ENCODE measurements at regions of chr1 and their contacts with region 1.

Region 1: DNA sequence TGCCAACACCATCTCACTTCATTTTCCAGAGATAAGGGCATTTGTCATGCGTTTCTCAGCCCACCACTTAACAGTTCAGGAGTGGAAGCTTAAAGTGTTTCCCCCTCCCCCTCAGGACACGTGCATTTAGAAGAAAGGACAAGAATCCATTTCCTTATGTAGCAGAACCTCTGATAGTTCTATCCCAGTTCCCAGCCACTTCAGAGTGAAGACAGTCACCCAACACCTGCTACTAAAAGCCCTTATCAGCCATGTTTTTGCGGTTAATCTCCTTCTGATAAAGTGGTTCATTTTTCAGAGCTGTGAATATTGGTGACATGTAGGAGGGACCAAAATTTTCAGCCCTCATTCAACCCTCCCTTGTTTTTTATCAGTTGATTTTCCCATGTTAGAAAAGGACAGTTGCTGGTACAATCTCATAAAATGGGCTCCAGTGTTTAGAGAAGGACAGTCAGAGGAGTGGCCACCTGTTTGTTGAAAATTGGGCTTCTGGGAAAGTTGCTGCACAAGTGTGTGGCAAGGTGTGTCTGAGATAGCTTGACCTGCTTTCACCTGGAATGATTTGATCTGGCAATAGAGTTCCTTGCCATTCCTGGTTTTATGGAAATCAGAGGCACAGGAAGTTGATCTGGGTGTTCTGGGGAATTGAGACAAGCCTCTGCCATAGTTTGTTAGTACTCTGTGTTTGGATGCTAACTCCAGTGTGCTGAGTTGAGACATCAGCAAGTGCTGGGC is 114.0 kb downstream of the PPP1R12B start:
- DNase-seq: no peak
- H3K4me3 Mint-ChIP-seq: no peak overlapping the region
- H3K27ac Mint-ChIP-seq: no peak overlapping the region
- H3K4me1 Mint-ChIP-seq: peaks cover 24% of the 10 kb centered on the region
- H3K27me3 Mint-ChIP-seq: no peaks in the 10 kb centered on the region
- CTCF ChIP-seq: no peak

Region 2: DNA sequence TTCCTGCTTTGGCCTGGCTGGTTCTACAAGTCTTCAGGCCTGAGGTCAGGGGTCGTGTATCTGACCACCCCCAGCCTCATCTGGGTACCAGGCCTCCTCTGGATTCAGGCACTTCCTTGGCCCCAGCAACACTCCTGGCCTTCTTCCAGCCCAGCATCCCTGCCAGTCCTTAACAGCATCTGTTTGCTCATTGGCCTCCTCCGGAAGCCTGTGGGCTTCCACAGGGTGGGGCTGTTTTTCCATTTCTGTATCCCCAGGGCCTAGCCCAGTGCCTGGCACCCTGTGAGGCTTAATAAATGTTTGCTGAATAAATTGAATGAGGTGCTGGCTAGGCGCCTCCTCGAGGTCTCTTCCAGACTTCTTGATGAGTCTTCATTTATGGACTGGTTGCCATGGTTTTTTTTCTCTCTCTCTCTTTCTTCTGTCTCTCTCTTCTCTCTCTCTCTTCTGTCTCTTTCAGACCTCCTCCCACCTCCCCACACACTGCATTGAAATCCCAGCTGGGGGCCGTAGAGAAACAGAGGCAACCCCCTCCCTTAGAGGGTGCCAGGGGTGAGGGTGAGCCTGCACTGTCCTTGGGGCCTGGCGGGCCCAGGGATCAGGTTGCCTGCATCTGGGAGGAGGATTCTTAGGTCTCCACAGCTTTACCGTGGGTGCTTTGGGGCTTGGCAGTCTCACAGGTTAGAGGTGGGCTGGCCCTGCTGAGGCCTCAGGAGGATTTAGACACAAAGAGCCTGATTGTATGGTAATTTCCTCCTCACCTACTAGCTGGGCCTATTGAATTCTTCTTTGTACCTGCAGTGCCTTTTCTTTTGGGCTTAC is 361.1 kb before region 1 on chr1:
- CTCF ChIA-PET with region 1: no interaction called
- POLR2A ChIA-PET with region 1: no interaction called
- intact Hi-C with region 1: no loop called
- DNase-seq: no peak
- H3K4me3 Mint-ChIP-seq: no peak overlapping the region
- H3K27ac Mint-ChIP-seq: no peak overlapping the region
- H3K4me1 Mint-ChIP-seq: peaks cover 13% of the 10 kb centered on the region
- H3K27me3 Mint-ChIP-seq: no peaks in the 10 kb centered on the region
- CTCF ChIP-seq: no peak

Region 3: GRCh38 chr1:202348509-202349205 is 113.9 kb before region 1 on chr1 and contains the start of gene PPP1R12B:
- CTCF ChIA-PET with region 1: interaction called, 12 read pairs
- POLR2A ChIA-PET with region 1: interaction called, 7 read pairs
- intact Hi-C with region 1: loop called (anchors 2 kb)
- DNase-seq: peak; percentile 100
- H3K4me3 Mint-ChIP-seq: peak within 1 kb of the TSS; percentile 81
- H3K27ac Mint-ChIP-seq: peak within 1 kb of the TSS; percentile 78
- H3K4me1 Mint-ChIP-seq: peaks cover 33% of the 10 kb centered on the region
- H3K27me3 Mint-ChIP-seq: no peaks in the 10 kb centered on the region
- CTCF ChIP-seq: no peak
- total RNA-seq, gene PPP1R12B: 31.1 and 33.8 TPM in 2 replicates

Region 4: DNA sequence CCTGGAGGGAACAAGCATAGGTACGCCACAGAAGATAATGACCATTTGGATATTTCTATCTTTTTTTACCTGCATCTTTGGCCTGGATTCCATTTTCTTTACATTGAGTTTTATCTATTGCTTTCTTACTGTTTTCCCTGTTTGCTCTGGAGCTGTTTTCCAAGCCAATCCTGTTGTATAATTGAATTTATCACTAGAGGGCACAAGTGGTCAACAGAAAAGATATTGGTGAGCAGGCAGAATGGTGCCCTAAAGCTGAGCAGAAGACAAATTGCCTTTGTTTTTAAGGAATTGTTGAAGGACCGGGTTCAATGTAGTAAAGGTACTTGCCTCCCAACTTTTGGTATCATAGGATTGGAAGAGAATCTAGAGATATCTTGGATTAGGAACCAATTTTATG is 38.8 kb after region 1 on chr1:
- CTCF ChIA-PET with region 1: interaction called, 3 read pairs
- POLR2A ChIA-PET with region 1: no interaction called
- intact Hi-C with region 1: loop called (anchors 2 kb)
- DNase-seq: peak; percentile 64
- H3K4me3 Mint-ChIP-seq: no peak overlapping the region
- H3K27ac Mint-ChIP-seq: no peak overlapping the region
- H3K4me1 Mint-ChIP-seq: peaks cover 10% of the 10 kb centered on the region
- H3K27me3 Mint-ChIP-seq: no peaks in the 10 kb centered on the region
- CTCF ChIP-seq: peak; percentile 89

Region 5: GRCh38 chr1:202576816-202577215 is 114.3 kb after region 1 on chr1:
- CTCF ChIA-PET with region 1: interaction called, 10 read pairs
- POLR2A ChIA-PET with region 1: interaction called, 9 read pairs
- intact Hi-C with region 1: no loop called
- DNase-seq: peak; percentile 94
- H3K4me3 Mint-ChIP-seq: no peak overlapping the region
- H3K27ac Mint-ChIP-seq: peak overlapping the region; percentile 68
- H3K4me1 Mint-ChIP-seq: peaks cover 41% of the 10 kb centered on the region
- H3K27me3 Mint-ChIP-seq: no peaks in the 10 kb centered on the region
- CTCF ChIP-seq: no peak

Region 6: GRCh38 chr1:202615501-202616354 is 153.2 kb after region 1 on chr1:
- CTCF ChIA-PET with region 1: interaction called, 14 read pairs
- POLR2A ChIA-PET with region 1: no interaction called
- intact Hi-C with region 1: no loop called
- DNase-seq: peak; percentile 31
- H3K4me3 Mint-ChIP-seq: no peak overlapping the region
- H3K27ac Mint-ChIP-seq: peak overlapping the region; percentile 28
- H3K4me1 Mint-ChIP-seq: peaks cover 28% of the 10 kb centered on the region
- H3K27me3 Mint-ChIP-seq: no peaks in the 10 kb centered on the region
- CTCF ChIP-seq: no peak

Region 7: DNA sequence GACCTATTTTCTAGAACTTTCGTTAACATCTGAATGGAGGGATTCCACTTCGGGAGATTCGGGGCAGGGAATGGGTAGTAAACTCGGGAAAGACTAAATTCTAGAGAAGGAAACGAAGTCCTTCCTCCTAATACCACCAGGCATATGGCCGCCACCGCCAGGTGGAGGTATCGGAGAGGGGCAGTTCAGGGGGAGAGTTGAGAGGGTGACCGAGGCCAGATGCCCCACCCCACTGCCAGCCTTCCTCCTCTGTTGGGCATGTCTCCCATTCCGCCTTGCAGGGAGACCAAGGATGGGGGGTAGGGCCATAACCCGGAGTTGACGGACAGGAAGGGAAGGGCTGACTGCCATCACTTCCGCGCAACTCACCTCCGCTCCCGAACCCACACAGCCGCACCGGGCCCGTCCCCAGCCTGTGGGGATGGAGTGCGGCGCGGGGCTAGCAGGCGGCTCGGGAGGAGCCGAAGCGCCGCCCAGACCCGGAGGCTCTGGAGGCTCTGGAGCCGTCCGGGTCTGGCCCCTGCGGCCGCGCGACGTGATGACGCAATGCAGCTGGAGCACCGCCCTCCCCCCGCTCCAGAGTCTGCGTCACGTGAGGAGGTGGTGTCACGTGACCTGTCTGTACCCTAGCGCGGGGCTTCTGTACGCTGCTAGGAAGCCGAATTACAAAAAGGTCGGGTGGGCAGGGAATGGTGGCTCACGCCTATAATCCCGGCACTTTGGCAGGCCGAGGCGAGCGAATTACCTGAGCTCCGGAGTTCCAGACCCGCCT is 464.4 kb after region 1 on chr1 and contains the start of gene KLHL12:
- CTCF ChIA-PET with region 1: no interaction called
- POLR2A ChIA-PET with region 1: no interaction called
- intact Hi-C with region 1: no loop called
- DNase-seq: peak; percentile 99
- H3K4me3 Mint-ChIP-seq: peak within 1 kb of the TSS; percentile 95
- H3K27ac Mint-ChIP-seq: peak within 1 kb of the TSS; percentile 93
- H3K4me1 Mint-ChIP-seq: peaks cover 38% of the 10 kb centered on the region
- H3K27me3 Mint-ChIP-seq: no peaks in the 10 kb centered on the region
- CTCF ChIP-seq: peak; percentile 87
- total RNA-seq, gene KLHL12: 51.0 and 59.0 TPM in 2 replicates